ENCODE measurements at regions of chr6 and their contacts with region 1.

Region 1: DNA sequence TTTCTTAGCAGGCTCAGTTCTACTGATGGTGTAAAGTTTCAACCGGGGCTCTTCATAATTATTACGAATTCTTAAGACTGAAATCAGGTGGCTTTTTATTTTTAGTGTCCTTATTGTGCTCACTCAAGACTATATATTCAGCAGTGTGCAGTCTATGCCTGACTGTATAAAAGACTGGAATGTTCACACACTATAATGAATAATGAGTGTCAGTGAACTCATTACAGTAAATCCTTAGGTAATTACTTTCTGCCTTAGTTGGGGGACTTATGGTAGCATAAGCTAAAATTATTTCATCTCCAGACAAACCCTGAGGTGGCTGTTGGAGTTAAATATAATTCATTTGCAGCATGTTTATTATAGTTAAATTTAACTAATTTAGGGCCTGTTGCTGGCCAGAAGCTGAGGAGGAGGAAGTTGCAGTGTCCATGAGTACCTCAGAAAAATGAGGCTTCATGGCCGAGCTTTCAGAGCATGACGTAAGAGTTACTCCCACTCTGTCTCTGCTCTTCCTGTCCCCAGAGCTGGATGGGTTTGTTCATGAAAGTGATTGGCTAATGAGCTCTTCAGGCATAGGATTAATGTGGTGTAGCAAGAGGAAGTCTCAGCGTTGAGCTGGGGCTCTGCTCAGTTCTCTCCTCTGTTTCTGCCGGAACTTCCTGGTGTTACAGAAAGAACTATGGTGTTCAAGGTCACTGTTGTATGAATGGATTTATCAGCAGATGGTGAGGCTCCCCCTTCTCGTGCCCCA is 335.7 kb downstream of the NRN1 start:
- DNase-seq: no peak
- ATAC-seq: no peak
- H3K4me3 ChIP-seq: no peak overlapping the region
- H3K27ac ChIP-seq: peak overlapping the region in 2 of 4 donors; percentile 66 to 77
- H3K4me1 ChIP-seq: peaks cover 28 to 38% of the 10 kb centered on the region in 2 donors
- H3K27me3 ChIP-seq: no peaks in the 10 kb centered on the region
- CTCF ChIP-seq: no peak
- POLR2A ChIP-seq: no peak

Region 2: GRCh38 chr6:5634525-5634924 is 36.5 kb before region 1 on chr6:
- in situ Hi-C with region 1: no loop called
- intact Hi-C with region 1: loop called (anchors 1 kb)
- DNase-seq: peak; percentile 35 to 45
- ATAC-seq: peak; percentile 98
- H3K4me3 ChIP-seq: no peak overlapping the region
- H3K27ac ChIP-seq: peak overlapping the region; percentile 65 to 81 (median 68)
- H3K4me1 ChIP-seq: peaks cover 10 to 12% of the 10 kb centered on the region in 2 donors
- H3K27me3 ChIP-seq: no peaks in the 10 kb centered on the region
- CTCF ChIP-seq: no peak
- POLR2A ChIP-seq: no peak

Region 3: GRCh38 chr6:5752391-5752680 is 81.3 kb after region 1 on chr6:
- in situ Hi-C with region 1: no loop called
- intact Hi-C with region 1: loop called (anchors 5 kb)
- DNase-seq: peak; percentile 57 to 61
- ATAC-seq: peak; percentile 75 to 86
- H3K4me3 ChIP-seq: no peak overlapping the region
- H3K27ac ChIP-seq: peak overlapping the region; percentile 80 to 94 (median 86)
- H3K4me1 ChIP-seq: peaks cover 54 to 61% of the 10 kb centered on the region in 2 donors
- H3K27me3 ChIP-seq: no peaks in the 10 kb centered on the region
- CTCF ChIP-seq: no peak
- POLR2A ChIP-seq: no peak

Measured in gastrocnemius medialis (tissue), 4 donors.